ENCODE measurements at regions of chr3 and their contacts with region 1.

Region 1: GRCh38 chr3:155742349-155742965 is 2.4 kb downstream of the PLCH1 start:
- DNase-seq: no peak

Region 2: DNA sequence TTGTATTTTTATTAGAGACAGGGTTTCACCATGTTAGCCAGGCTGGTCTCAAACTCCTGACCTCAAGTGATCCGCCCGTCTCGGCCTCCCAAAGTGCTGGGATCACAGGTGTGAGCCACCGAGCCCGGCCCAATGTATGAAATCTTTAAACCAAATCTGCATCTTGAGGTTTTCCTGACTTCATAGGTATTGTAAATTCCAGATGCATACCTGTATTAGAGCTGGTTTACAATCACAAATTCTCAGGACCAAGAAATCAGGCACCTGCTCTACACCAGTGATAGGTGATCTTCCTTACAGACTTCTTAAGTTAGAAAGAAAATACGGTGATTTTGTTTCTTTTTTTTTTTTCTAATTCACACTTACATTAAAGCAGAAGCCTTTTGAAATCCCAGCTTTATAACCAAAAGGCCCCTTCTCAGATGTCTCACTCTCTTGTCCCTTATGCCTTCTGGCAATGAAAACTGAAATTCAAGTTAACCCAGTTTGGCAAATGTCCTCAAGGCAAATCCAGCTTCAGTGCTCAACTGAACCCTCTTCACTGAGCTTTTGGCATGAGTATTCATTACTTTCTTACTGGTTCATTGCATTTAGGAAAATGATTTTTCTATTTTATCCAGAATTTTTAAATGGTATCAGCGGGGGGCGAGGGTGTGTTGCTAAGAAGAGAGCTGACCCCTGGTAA is 14.8 kb before region 1 on chr3:
- intact Hi-C with region 1: loop called in 1 of 2 experiments (anchors 1 kb)
- DNase-seq: no peak